ENCODE measurements at regions of chr16 and their contacts with region 1.

Region 1: GRCh38 chr16:9008601-9009260 is 45.0 kb upstream of the USP7 start:
- DNase-seq: peak; percentile 44 to 78 (median 69)
- ATAC-seq: peak; percentile 84
- H3K4me3 ChIP-seq: no peak overlapping the region
- H3K4me3 Mint-ChIP-seq: peak overlapping the region; percentile 29
- H3K27ac ChIP-seq: no peak overlapping the region
- H3K27ac Mint-ChIP-seq: no peak overlapping the region
- H3K4me1 ChIP-seq: peaks cover 9% of the 10 kb centered on the region
- H3K4me1 Mint-ChIP-seq: peaks cover 3% of the 10 kb centered on the region
- H3K27me3 ChIP-seq: peaks cover 0 to 3% of the 10 kb centered on the region in 2 experiments
- H3K27me3 Mint-ChIP-seq: peaks cover 21% of the 10 kb centered on the region
- CTCF ChIP-seq: peak; percentile 73

Region 2: DNA sequence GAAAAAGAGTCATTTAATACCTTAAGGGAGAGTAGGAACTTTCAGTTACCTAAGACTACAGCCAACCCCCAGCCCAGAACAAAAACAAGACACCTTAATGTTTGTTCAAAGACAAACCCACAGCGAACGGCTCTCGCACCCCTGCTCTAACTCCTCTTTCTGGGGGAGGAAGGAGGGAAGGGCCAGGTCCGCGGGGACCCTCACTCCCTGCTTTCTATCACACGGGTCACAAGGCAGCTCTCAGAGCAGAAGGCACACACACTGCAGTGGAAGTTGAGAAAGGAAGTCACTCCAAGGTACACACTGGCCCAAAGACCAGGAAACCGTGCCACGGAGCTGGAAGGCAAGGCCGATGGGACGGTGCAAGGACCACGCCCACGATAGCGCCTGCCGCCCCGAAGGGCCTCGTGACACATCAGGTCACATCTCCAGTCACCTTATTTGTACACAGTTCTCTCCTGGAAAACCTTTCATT is 116.6 kb before region 1 on chr16:
- CTCF ChIA-PET with region 1: interaction called, 10 read pairs
- POLR2A ChIA-PET with region 1: no interaction called
- intact Hi-C with region 1: no loop called
- DNase-seq: peak in 1 of 9 experiments; percentile 33
- ATAC-seq: no peak
- H3K4me3 ChIP-seq: no peak overlapping the region
- H3K4me3 Mint-ChIP-seq: peak overlapping the region; percentile 26
- H3K27ac ChIP-seq: peak overlapping the region in 1 of 2 experiments; percentile 31
- H3K27ac Mint-ChIP-seq: peak overlapping the region; percentile 87
- H3K4me1 ChIP-seq: no peaks in the 10 kb centered on the region
- H3K4me1 Mint-ChIP-seq: peaks cover 12% of the 10 kb centered on the region
- H3K27me3 ChIP-seq: no peaks in the 10 kb centered on the region
- H3K27me3 Mint-ChIP-seq: no peaks in the 10 kb centered on the region
- CTCF ChIP-seq: no peak

Region 3: GRCh38 chr16:8905168-8905762 is 103.5 kb before region 1 on chr16:
- CTCF ChIA-PET with region 1: interaction called, 12 read pairs
- POLR2A ChIA-PET with region 1: no interaction called
- intact Hi-C with region 1: loop called in 1 of 2 experiments (anchors 5 kb)
- DNase-seq: peak in 2 of 9 experiments; percentile 35 to 48
- ATAC-seq: peak; percentile 66
- H3K4me3 ChIP-seq: no peak overlapping the region
- H3K4me3 Mint-ChIP-seq: no peak overlapping the region
- H3K27ac ChIP-seq: no peak overlapping the region
- H3K27ac Mint-ChIP-seq: no peak overlapping the region
- H3K4me1 ChIP-seq: peaks cover 8% of the 10 kb centered on the region
- H3K4me1 Mint-ChIP-seq: peaks cover 11% of the 10 kb centered on the region
- H3K27me3 ChIP-seq: no peaks in the 10 kb centered on the region
- H3K27me3 Mint-ChIP-seq: no peaks in the 10 kb centered on the region
- CTCF ChIP-seq: peak; percentile 15

Region 4: DNA sequence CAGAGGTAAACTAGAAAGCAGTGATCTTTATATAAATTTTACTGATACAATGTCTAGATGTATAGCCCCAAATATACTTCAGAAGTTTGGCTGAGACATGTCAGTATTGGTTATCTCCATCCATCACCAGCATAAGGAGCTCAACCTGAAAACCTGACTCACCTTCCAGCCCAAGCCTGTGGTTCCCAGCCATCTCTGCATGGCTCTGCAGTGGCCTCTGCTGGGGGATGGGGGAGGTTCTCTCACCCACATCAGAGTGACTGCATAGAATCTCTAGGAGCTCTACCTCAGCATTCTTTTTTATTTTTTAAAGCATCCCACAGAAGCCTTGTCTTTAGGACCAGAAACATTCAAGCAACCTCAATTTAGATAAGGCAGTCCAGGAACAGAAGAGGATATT is 72.3 kb before region 1 on chr16:
- CTCF ChIA-PET with region 1: interaction called, 31 read pairs
- POLR2A ChIA-PET with region 1: no interaction called
- intact Hi-C with region 1: loop called (anchors 1 to 2 kb)
- DNase-seq: peak; percentile 35 to 82 (median 75)
- ATAC-seq: peak; percentile 98
- H3K4me3 ChIP-seq: no peak overlapping the region
- H3K4me3 Mint-ChIP-seq: peak overlapping the region; percentile 30
- H3K27ac ChIP-seq: no peak overlapping the region
- H3K27ac Mint-ChIP-seq: peak overlapping the region; percentile 21
- H3K4me1 ChIP-seq: peaks cover 62% of the 10 kb centered on the region
- H3K4me1 Mint-ChIP-seq: peaks cover 87% of the 10 kb centered on the region
- H3K27me3 ChIP-seq: no peaks in the 10 kb centered on the region
- H3K27me3 Mint-ChIP-seq: no peaks in the 10 kb centered on the region
- CTCF ChIP-seq: peak; percentile 74

Region 5: DNA sequence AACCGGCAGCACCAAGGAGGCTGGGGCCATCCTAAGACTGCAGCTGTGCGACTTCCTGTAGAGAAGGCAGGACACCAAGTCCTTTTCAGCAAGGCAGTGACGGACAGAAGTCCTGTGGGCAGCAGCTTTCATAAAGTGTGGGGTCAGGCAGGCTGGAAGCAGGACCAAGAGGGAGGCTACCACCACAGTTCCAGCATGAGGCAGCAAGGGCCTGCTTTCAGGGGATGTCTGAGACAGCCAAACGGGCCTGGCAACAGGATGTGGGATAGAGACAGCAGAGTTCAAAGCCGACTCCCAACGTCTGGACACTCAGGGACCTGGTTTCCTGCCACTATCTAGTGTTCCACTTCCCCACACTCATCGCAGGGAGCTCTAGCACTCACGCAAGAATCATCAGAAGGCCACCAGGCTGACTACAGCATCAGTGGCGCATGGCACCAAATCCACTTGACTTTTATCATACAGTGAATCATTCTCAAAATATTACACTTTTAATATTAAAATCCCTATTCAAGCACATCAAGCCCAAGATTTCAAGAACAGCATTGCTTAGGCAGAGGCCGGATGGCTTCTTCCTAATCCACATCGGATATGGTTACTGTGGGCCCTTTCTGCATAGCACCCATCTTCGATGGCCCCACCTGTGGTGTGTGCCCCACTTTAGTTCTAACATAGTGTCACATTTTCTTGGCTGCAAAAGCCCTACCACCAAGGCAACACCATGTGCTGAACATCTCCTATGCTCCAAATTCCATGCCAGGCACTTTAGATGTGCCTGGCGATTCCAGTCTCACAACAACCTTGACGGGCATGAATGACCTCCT is 50.2 kb before region 1 on chr16:
- CTCF ChIA-PET with region 1: interaction called, 3 read pairs
- POLR2A ChIA-PET with region 1: no interaction called
- intact Hi-C with region 1: loop called in 1 of 2 experiments (anchors 1 kb)
- DNase-seq: peak in 5 of 9 experiments; percentile 17 to 62 (median 38)
- ATAC-seq: no peak
- H3K4me3 ChIP-seq: peak overlapping the region; percentile 24 to 25
- H3K4me3 Mint-ChIP-seq: peak overlapping the region; percentile 75
- H3K27ac ChIP-seq: peak overlapping the region; percentile 9 to 76
- H3K27ac Mint-ChIP-seq: peak overlapping the region; percentile 88
- H3K4me1 ChIP-seq: peaks cover 70% of the 10 kb centered on the region
- H3K4me1 Mint-ChIP-seq: peaks cover 77% of the 10 kb centered on the region
- H3K27me3 ChIP-seq: no peaks in the 10 kb centered on the region
- H3K27me3 Mint-ChIP-seq: no peaks in the 10 kb centered on the region
- CTCF ChIP-seq: no peak

Region 6: DNA sequence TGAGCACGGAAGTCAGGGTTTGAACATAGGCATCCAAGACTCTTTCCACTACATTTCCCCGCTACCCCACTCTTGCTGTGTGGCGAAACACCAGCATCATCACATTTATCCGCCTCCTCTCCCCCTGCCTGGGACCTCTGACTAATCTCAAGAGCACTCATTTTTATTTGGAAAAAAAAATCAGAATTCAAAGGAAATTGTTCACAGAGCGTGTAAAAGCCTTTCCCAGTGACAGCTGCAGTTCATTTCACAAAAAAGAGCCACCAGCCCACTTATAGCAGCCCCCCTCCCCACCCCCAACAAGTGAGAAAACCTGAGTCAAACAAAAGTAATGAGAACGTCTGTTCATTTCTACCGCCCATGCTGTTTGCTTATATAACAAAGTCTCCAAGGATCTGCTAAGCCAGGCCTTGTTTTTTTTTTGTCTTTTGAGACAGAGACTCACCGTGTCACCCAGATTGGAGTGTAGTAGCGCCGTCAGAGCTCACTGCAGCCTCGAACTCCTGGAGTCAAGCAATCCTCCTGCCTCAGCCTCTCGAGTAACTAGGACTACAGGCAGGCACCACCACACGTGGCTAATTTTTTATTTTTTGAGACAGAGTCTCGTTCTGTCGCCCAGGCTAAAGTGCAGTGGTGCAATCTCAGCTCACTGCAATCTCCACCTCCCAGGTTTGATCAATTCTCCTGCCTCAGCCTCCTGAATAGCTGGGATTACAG is 34.4 kb after region 1 on chr16:
- CTCF ChIA-PET with region 1: no interaction called
- POLR2A ChIA-PET with region 1: no interaction called
- intact Hi-C with region 1: no loop called
- DNase-seq: no peak
- ATAC-seq: no peak
- H3K4me3 ChIP-seq: no peak overlapping the region
- H3K4me3 Mint-ChIP-seq: no peak overlapping the region
- H3K27ac ChIP-seq: no peak overlapping the region
- H3K27ac Mint-ChIP-seq: no peak overlapping the region
- H3K4me1 ChIP-seq: no peaks in the 10 kb centered on the region
- H3K4me1 Mint-ChIP-seq: no peaks in the 10 kb centered on the region
- H3K27me3 ChIP-seq: no peaks in the 10 kb centered on the region
- H3K27me3 Mint-ChIP-seq: no peaks in the 10 kb centered on the region
- CTCF ChIP-seq: no peak

Region 7: GRCh38 chr16:9134739-9135138 is 126.0 kb after region 1 on chr16:
- CTCF ChIA-PET with region 1: interaction called, 18 read pairs
- POLR2A ChIA-PET with region 1: no interaction called
- intact Hi-C with region 1: loop called in 1 of 2 experiments (anchors 1 kb)
- DNase-seq: peak; percentile 32 to 76 (median 64)
- ATAC-seq: peak; percentile 80
- H3K4me3 ChIP-seq: no peak overlapping the region
- H3K4me3 Mint-ChIP-seq: no peak overlapping the region
- H3K27ac ChIP-seq: no peak overlapping the region
- H3K27ac Mint-ChIP-seq: peak overlapping the region; percentile 55
- H3K4me1 ChIP-seq: peaks cover 13% of the 10 kb centered on the region
- H3K4me1 Mint-ChIP-seq: peaks cover 20% of the 10 kb centered on the region
- H3K27me3 ChIP-seq: no peaks in the 10 kb centered on the region
- H3K27me3 Mint-ChIP-seq: no peaks in the 10 kb centered on the region
- CTCF ChIP-seq: peak; percentile 68

Measured in CD8-positive, alpha-beta T cell (primary cell).